ENCODE measurements at regions of chr6 and their contacts with region 1.

Region 1: GRCh38 chr6:27871924-27872638 is 40.1 kb downstream of the OR2B2 start:
- DNase-seq: peak; percentile 71 to 97 (median 82)
- ATAC-seq: peak; percentile 75
- H3K4me3 ChIP-seq: peak overlapping the region; percentile 86
- H3K4me3 Mint-ChIP-seq: peak overlapping the region; percentile 93
- H3K27ac ChIP-seq: peak overlapping the region; percentile 89
- H3K27ac Mint-ChIP-seq: peak overlapping the region; percentile 93
- H3K4me1 ChIP-seq: peaks cover 39% of the 10 kb centered on the region
- H3K4me1 Mint-ChIP-seq: peaks cover 41% of the 10 kb centered on the region
- H3K27me3 ChIP-seq: no peaks in the 10 kb centered on the region
- H3K27me3 Mint-ChIP-seq: no peaks in the 10 kb centered on the region
- CTCF ChIP-seq: peak; percentile 43

Region 2: GRCh38 chr6:26054857-26055669 is 1817.0 kb before region 1 on chr6:
- CTCF ChIA-PET with region 1: no interaction called
- POLR2A ChIA-PET with region 1: interaction called, 14 read pairs
- intact Hi-C with region 1: no loop called
- DNase-seq: peak; percentile 68 to 97 (median 80)
- ATAC-seq: peak; percentile 71
- H3K4me3 ChIP-seq: peak overlapping the region; percentile 89
- H3K4me3 Mint-ChIP-seq: peak overlapping the region; percentile 97
- H3K27ac ChIP-seq: peak overlapping the region; percentile 81
- H3K27ac Mint-ChIP-seq: peak overlapping the region; percentile 96
- H3K4me1 ChIP-seq: peaks cover 29% of the 10 kb centered on the region
- H3K4me1 Mint-ChIP-seq: peaks cover 28% of the 10 kb centered on the region
- H3K27me3 ChIP-seq: no peaks in the 10 kb centered on the region
- H3K27me3 Mint-ChIP-seq: no peaks in the 10 kb centered on the region
- CTCF ChIP-seq: no peak

Region 3: GRCh38 chr6:27479319-27480182 is 392.5 kb before region 1 on chr6:
- CTCF ChIA-PET with region 1: no interaction called
- POLR2A ChIA-PET with region 1: interaction called, 24 read pairs
- intact Hi-C with region 1: no loop called
- DNase-seq: peak; percentile 82 to 94 (median 90)
- ATAC-seq: peak; percentile 71
- H3K4me3 ChIP-seq: peak overlapping the region; percentile 62
- H3K4me3 Mint-ChIP-seq: no peak overlapping the region
- H3K27ac ChIP-seq: peak overlapping the region; percentile 93 to 94
- H3K27ac Mint-ChIP-seq: no peak overlapping the region
- H3K4me1 ChIP-seq: peaks cover 16% of the 10 kb centered on the region
- H3K4me1 Mint-ChIP-seq: peaks cover 3% of the 10 kb centered on the region
- H3K27me3 ChIP-seq: no peaks in the 10 kb centered on the region
- H3K27me3 Mint-ChIP-seq: no peaks in the 10 kb centered on the region
- CTCF ChIP-seq: no peak

Region 4: DNA sequence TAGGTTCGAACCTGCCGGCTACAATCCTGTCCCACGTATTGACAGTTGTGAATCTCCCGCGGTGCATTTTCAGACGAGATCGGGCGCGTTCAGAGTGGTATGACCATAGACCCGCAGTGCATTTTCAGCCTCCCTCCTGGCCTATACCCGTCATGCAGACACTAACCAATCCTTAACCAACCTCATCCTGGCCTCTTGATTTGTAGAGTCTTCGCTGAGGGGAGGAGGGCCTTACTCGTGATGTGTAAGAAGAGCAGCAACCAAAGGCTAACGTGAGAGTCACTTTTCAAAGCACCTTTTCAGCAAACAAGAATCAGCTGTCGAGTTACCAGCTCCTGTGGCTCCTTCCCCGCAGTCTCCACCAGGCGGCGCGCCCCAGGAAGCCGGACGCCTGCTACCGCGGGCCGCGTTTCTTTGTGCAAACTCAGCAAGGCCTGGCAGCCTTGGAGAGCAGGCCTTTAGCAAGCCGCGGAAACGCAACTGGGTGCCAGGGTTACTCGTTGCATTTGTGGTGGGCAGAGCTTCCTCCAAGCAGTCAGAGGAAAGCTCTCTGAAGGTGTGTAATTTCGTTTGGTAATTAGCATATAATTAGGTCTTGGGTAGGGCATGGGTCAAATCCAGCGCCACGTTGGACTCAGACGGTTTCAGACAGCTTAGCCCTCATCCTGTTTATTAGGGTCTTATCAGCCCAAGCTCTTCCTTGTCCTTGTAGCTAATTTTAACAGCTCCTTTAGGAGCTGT is 99.7 kb before region 1 on chr6:
- CTCF ChIA-PET with region 1: interaction called, 4 read pairs
- POLR2A ChIA-PET with region 1: interaction called, 15 read pairs
- intact Hi-C with region 1: no loop called
- DNase-seq: peak; percentile 70 to 92 (median 82)
- ATAC-seq: peak; percentile 97
- H3K4me3 ChIP-seq: no peak overlapping the region
- H3K4me3 Mint-ChIP-seq: peak overlapping the region; percentile 36
- H3K27ac ChIP-seq: no peak overlapping the region
- H3K27ac Mint-ChIP-seq: no peak overlapping the region
- H3K4me1 ChIP-seq: peaks cover 9% of the 10 kb centered on the region
- H3K4me1 Mint-ChIP-seq: peaks cover 9% of the 10 kb centered on the region
- H3K27me3 ChIP-seq: peaks cover 0 to 10% of the 10 kb centered on the region in 2 experiments
- H3K27me3 Mint-ChIP-seq: peaks cover 18% of the 10 kb centered on the region
- CTCF ChIP-seq: peak; percentile 90

Region 5: DNA sequence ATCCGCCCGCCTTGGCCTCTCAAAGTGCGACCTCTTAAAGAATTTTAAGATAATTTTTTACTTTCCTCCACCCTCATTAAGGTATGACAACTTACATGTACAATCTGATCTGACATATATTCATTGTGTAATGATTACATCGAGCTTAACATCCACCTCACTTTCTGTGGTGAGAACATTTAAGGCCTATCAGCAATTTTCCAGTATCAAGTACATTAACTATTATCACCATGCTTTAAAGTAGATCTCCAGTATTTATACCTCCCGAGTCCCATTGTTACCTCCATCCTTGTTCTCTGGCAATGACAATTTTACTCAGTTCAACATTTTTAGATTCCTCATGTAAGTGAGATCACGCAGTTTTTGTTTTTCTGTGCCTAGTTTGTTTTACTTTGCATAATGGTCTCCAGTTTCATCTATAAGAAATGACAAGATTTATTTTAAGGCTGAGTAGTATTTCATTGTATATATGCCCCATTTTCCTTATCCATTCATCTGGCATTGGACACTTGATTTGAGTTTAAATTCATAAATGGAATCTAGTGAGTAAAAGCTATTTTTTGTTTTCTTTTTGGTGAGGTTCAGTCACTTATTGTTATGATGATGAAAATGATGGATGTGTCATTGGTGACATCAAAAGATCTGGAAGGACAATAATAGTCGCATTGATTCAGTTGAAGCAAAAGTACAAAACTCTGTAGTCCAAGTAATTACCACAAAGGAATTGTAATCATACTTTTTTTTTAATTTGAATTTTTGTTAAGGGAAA is 46.9 kb before region 1 on chr6:
- CTCF ChIA-PET with region 1: interaction called, 8 read pairs
- POLR2A ChIA-PET with region 1: interaction called, 1,427 read pairs
- intact Hi-C with region 1: loop called in 1 of 2 experiments (anchors 2 kb)
- DNase-seq: peak in 2 of 14 experiments; percentile 27 to 38
- ATAC-seq: no peak
- H3K4me3 ChIP-seq: peak overlapping the region; percentile 82
- H3K4me3 Mint-ChIP-seq: peak overlapping the region; percentile 90
- H3K27ac ChIP-seq: peak overlapping the region; percentile 77 to 87
- H3K27ac Mint-ChIP-seq: peak overlapping the region; percentile 99
- H3K4me1 ChIP-seq: peaks cover 8% of the 10 kb centered on the region
- H3K4me1 Mint-ChIP-seq: peaks cover 38% of the 10 kb centered on the region
- H3K27me3 ChIP-seq: no peaks in the 10 kb centered on the region
- H3K27me3 Mint-ChIP-seq: no peaks in the 10 kb centered on the region
- CTCF ChIP-seq: no peak

Measured in CD4-positive, alpha-beta T cell (primary cell).